ENCODE measurements at regions of chr7 and their contacts with region 1.

Region 1: GRCh38 chr7:117715784-117716445 is 157.3 kb downstream of the CTTNBP2 start:
- DNase-seq: peak; percentile 31
- ATAC-seq: peak; percentile 86
- H3K4me3 Mint-ChIP-seq: no peak overlapping the region
- H3K27ac Mint-ChIP-seq: no peak overlapping the region
- H3K4me1 Mint-ChIP-seq: no peaks in the 10 kb centered on the region
- H3K27me3 Mint-ChIP-seq: no peaks in the 10 kb centered on the region
- CTCF ChIP-seq: 0 out of 2 replicates have a peak, but pooled peaks have one; percentile 26

Region 2: DNA sequence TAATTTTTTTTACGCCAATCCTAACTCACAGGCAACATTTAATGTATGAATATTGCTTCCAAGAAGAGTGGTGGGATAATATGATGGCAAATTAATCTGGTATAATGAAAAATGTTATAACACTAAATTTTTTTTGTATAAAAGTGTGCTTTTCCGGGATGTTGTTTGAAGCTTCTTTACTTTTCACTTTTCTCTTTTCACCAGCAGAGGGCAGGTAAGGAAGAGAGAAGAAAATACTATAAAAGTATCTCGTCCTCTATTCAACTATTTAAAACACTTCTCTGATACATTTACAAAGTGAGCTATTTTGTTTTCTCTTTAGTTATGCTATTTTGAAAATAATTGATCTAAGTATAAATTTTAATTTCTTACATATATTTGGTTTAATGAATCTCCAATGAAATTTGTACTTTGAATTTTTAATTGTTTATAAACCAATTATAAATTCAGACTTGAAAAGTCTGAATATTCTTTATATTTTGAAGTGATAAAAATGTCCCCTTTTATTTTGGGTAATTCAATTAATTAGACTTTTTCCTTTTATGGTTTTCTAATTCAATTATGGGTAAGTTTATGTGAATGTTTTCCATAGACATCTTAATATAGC is 256.8 kb before region 1 on chr7:
- CTCF ChIA-PET with region 1: interaction called, 17 read pairs
- POLR2A ChIA-PET with region 1: no interaction called
- DNase-seq: no peak
- ATAC-seq: no peak
- H3K4me3 Mint-ChIP-seq: no peak overlapping the region
- H3K27ac Mint-ChIP-seq: no peak overlapping the region
- H3K4me1 Mint-ChIP-seq: no peaks in the 10 kb centered on the region
- H3K27me3 Mint-ChIP-seq: no peaks in the 10 kb centered on the region
- CTCF ChIP-seq: peak; percentile 32; the same call in 1 of the 2 replicates

Region 3: GRCh38 chr7:117673839-117674238 is 42.1 kb before region 1 on chr7:
- CTCF ChIA-PET with region 1: interaction called, 53 read pairs
- POLR2A ChIA-PET with region 1: interaction called, 3 read pairs
- DNase-seq: no peak
- ATAC-seq: no peak
- H3K4me3 Mint-ChIP-seq: peak overlapping the region; percentile 68
- H3K27ac Mint-ChIP-seq: peak overlapping the region; percentile 95
- H3K4me1 Mint-ChIP-seq: peaks cover 70% of the 10 kb centered on the region
- H3K27me3 Mint-ChIP-seq: no peaks in the 10 kb centered on the region
- CTCF ChIP-seq: no peak

Region 4: DNA sequence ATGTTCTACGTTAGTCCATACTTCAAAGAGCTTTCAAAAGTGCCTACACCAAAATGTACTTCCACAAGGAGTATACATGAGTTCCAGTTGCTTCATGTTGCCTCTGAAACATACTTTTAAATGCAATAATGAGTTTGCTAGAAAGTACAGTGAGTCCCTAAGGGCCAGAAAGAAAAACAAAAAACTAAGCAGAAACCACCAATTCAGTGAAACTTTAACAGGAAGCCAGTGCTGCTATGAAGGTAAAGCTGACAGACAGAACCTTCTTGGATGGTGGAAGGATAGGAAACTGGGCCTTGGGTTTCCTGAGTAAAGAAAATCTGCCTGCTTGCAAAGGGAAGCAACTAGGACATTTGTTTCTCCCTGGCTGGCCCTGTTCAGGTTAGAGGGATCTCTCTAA is 53.2 kb after region 1 on chr7:
- CTCF ChIA-PET with region 1: no interaction called
- POLR2A ChIA-PET with region 1: no interaction called
- DNase-seq: no peak
- ATAC-seq: no peak
- H3K4me3 Mint-ChIP-seq: no peak overlapping the region
- H3K27ac Mint-ChIP-seq: no peak overlapping the region
- H3K4me1 Mint-ChIP-seq: peaks cover 5% of the 10 kb centered on the region; the same call in 1 of the 2 replicates
- H3K27me3 Mint-ChIP-seq: no peaks in the 10 kb centered on the region
- CTCF ChIP-seq: no peak

Measured in WTC11 (cell line).